ENCODE measurements at regions of chr3 and their contacts with region 1.

Region 1: GRCh38 chr3:158918008-158918407 is 116.2 kb downstream of the MFSD1 start:
- DNase-seq: peak; percentile 52 to 55
- H3K4me3 ChIP-seq: no peak overlapping the region
- H3K4me3 Mint-ChIP-seq: no peak overlapping the region
- H3K27ac Mint-ChIP-seq: no peak overlapping the region
- H3K4me1 ChIP-seq: no peaks in the 10 kb centered on the region
- H3K4me1 Mint-ChIP-seq: no peaks in the 10 kb centered on the region
- H3K27me3 ChIP-seq: no peaks in the 10 kb centered on the region
- H3K27me3 Mint-ChIP-seq: peaks cover 7% of the 10 kb centered on the region
- CTCF ChIP-seq: peak; percentile 73 to 82

Region 2: GRCh38 chr3:159130108-159130507 is 212.1 kb after region 1 on chr3:
- CTCF ChIA-PET with region 1: no interaction called
- POLR2A ChIA-PET with region 1: no interaction called
- intact Hi-C with region 1: loop called (anchors 5 kb)
- DNase-seq: peak in 1 of 2 experiments; percentile 5
- H3K4me3 ChIP-seq: no peak overlapping the region
- H3K4me3 Mint-ChIP-seq: no peak overlapping the region
- H3K27ac Mint-ChIP-seq: no peak overlapping the region
- H3K4me1 ChIP-seq: no peaks in the 10 kb centered on the region
- H3K4me1 Mint-ChIP-seq: no peaks in the 10 kb centered on the region
- H3K27me3 ChIP-seq: no peaks in the 10 kb centered on the region
- H3K27me3 Mint-ChIP-seq: peaks cover 4% of the 10 kb centered on the region
- CTCF ChIP-seq: peak; percentile 25 to 30

Region 3: DNA sequence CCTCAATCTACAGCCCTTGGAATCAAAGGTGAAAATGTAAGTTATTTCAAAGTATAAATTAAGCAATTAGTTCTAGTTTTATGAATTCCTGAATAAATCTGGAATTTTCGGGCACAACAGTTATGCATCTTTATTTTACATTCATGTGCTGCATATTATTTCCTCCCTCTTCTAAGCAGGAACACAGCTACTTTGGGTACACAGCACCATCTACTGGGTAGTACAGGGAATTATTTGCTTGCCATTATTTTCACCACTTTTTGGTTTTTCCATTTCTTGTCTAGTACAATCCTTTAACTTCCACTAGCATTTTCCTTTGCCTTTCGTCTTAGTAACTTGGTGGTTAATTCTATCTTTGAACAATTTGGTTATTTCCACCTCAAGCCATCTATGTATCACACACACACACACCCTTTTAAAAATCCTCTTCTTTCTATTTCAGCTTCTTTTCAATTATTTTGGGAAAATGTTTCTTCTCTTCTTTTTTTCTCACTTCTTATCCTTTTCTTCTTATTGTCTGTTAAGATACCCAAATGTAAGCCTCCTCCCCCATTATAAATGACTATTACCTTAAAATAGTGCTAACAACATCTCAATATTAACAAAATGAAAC is 334.9 kb after region 1 on chr3:
- CTCF ChIA-PET with region 1: no interaction called
- POLR2A ChIA-PET with region 1: no interaction called
- intact Hi-C with region 1: loop called (anchors 2 kb)
- DNase-seq: peak in 1 of 2 experiments; percentile 11
- H3K4me3 ChIP-seq: no peak overlapping the region
- H3K4me3 Mint-ChIP-seq: no peak overlapping the region
- H3K27ac Mint-ChIP-seq: no peak overlapping the region
- H3K4me1 ChIP-seq: no peaks in the 10 kb centered on the region
- H3K4me1 Mint-ChIP-seq: no peaks in the 10 kb centered on the region
- H3K27me3 ChIP-seq: no peaks in the 10 kb centered on the region
- H3K27me3 Mint-ChIP-seq: peaks cover 10% of the 10 kb centered on the region
- CTCF ChIP-seq: peak in 1 of 2 experiments; percentile 48